ENCODE measurements at regions of chrX and their contacts with region 1.

Region 1: DNA sequence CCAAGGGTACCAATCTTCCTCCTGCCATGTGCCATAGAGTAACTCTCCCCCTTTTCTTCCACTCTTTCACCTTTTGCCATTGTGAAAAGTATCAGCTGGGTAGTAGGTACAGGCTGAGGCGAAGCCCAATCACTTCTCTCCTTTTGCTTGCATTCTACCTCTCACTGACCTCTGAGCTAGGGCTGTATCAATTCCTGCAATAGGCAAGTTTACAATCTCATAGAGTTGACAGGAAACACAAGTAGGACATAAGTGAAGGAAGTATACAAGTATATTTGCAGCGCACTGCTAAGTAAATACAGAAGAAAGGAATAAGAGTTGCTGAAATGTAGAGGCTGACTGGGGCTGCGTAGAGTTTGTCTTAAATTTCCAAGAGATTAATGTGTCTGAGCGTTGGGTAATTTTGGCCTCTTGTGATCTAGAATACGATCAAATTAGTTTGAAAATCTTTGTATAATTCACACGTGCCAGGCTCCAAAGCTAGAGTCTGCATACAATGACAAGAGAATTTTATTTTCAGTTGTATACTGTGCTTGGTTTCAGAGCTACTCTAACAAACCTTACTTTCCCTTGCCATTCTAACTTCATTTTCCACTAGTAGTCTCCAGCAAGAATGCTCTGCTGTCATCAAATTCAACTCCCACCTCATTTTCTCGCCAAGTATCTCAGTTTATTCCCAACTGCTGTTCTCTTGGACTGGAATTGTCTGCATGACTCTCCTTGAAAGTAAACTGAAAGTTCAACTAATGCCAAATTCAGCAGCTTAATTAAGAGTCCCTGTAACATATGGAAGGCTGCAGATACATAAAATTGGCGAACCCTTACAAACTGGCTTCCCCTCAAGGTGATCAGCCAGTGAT is 90.3 kb downstream of the ATP11C start:
- DNase-seq: no peak
- ATAC-seq: peak in 2 of 8 donors; percentile 24 to 38
- H3K4me3 ChIP-seq: no peak overlapping the region
- H3K27ac ChIP-seq: no peak overlapping the region
- H3K4me1 ChIP-seq: peaks cover 0 to 11% (median 0%) of the 10 kb centered on the region in 9 donors
- H3K27me3 ChIP-seq: no peaks in the 10 kb centered on the region
- CTCF ChIP-seq: no peak

Region 2: DNA sequence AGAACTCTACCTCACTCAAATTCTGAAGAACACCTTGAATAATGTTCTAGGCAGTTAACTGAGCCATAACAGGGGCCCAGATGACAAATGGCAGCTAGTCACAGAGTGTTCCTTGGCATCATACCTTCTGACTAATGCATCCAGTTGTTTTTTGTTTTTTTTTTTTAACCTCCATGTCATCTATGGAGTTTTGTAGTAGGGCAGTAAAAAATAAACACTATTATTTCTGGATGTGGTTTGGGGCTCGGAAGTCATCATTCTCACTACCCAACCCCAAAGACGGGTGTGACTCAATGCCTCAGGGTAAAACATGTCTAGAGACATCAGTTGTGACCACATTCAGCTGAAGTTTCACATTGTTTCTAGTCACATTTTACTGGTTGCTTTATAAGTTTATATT is 103.4 kb before region 1 on chrX:
- intact Hi-C with region 1: no loop called
- DNase-seq: no peak
- ATAC-seq: no peak
- H3K4me3 ChIP-seq: no peak overlapping the region
- H3K27ac ChIP-seq: no peak overlapping the region
- H3K4me1 ChIP-seq: no peaks in the 10 kb centered on the region
- H3K27me3 ChIP-seq: peaks cover 0 to 11% (median 0%) of the 10 kb centered on the region in 7 donors
- CTCF ChIP-seq: no peak

Region 3: GRCh38 chrX:139890991-139891700 is 48.6 kb after region 1 on chrX:
- intact Hi-C with region 1: loop called in 1 of 10 experiments (anchors 1 kb)
- DNase-seq: no peak
- ATAC-seq: no peak
- H3K4me3 ChIP-seq: no peak overlapping the region
- H3K27ac ChIP-seq: no peak overlapping the region
- H3K4me1 ChIP-seq: peaks cover 0 to 7% (median 0%) of the 10 kb centered on the region in 9 donors
- H3K27me3 ChIP-seq: no peaks in the 10 kb centered on the region
- CTCF ChIP-seq: no peak

Measured in heart right ventricle (tissue), 16 donors.